RWPE1 (cell line): ENCODE measurements at regions of chr6 and their contacts with region 1.

Region 1: DNA sequence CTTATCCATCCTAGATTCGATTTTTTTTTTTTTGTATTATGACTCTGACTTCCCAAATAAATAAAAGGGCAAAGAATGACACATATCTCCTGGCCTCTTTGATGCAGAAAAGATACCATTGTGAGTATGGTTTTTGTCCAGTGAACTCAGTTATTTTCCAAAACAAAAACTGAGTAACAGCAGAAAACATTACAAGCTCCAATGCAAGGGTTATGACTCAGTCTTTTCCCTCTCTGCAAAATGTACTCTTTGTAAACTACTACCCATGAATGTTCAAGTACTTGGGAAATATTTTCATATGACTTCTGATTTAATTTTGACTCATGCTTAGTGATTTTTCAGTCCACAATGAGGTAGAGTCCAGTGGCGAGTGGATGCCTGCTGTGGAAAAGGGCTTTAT is 355.3 kb downstream of the RNF144B start:
- DNase-seq: no peak
- H3K27ac ChIP-seq: no peak overlapping the region
- CTCF ChIP-seq: no peak

Region 2: GRCh38 chr6:18405477-18406293 is 336.7 kb before region 1 on chr6:
- CTCF ChIA-PET with region 1: no interaction called
- POLR2A ChIA-PET with region 1: no interaction called
- DNase-seq: peak; percentile 67
- H3K27ac ChIP-seq: peak overlapping the region; percentile 57
- CTCF ChIP-seq: no peak

Region 3: DNA sequence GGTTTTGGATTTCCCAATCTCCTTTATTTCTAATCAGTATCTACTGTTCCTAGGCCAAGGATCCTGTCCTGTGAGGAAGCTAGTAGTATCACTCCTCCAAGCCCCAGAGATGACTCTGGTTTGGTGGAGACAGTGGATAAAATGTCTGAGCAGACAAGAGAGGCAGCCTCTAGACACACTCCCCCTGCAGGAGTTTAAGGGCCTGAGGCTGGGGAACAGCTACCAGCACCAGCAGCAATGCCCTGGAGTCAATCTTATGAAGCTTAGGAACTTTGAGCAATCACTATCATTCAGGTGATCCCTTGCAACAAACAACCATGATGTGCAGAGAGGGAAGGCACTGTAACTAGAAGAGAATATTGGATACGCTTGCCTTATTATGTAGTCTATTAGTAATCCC is 710.1 kb after region 1 on chr6:
- CTCF ChIA-PET with region 1: no interaction called
- POLR2A ChIA-PET with region 1: interaction called, 10 read pairs
- DNase-seq: no peak
- H3K27ac ChIP-seq: no peak overlapping the region
- CTCF ChIP-seq: no peak